ENCODE measurements at regions of chr11 and their contacts with region 1.

Region 1: DNA sequence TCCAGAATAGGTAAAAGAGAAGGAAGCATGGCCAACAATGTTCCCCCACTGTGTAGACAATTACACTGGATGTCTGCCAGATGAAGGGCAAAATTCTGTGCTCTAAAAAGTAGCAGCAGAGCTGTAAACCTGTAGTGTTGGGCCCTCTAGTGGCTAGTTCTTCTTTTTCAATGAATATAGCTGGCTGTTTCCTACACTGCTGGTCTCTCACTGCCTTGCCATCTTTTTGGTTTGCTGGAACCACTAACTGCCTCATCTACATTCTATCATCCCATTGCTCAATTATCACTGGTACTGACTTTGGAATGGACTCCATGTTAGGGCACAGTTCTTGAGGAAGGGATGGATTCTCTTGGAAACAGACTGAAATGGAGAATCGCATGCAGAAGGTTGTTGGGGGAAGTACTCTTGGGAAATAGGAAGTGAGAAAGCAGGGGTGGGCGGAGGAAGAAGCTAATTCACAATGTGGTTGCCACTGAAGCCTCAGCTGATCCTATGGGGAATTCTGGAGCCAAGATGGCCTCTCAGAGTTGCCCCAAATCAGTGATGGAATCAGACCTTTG is 17.9 kb downstream of the KCNE3 start:
- DNase-seq: peak; percentile 75 to 87 (median 81)
- H3K4me3 ChIP-seq: peak overlapping the region in 2 of 7 experiments; percentile 6 to 25
- H3K27ac ChIP-seq: no peak overlapping the region
- H3K4me1 ChIP-seq: peaks cover 0 to 5% (median 1%) of the 10 kb centered on the region in 4 experiments
- H3K27me3 ChIP-seq: no peaks in the 10 kb centered on the region

Region 2: GRCh38 chr11:74255741-74256369 is 193.6 kb before region 1 on chr11:
- CTCF ChIA-PET with region 1: interaction called, 37 read pairs
- POLR2A ChIA-PET with region 1: no interaction called
- DNase-seq: peak; percentile 76 to 89 (median 83)
- H3K4me3 ChIP-seq: no peak overlapping the region
- H3K27ac ChIP-seq: no peak overlapping the region
- H3K4me1 ChIP-seq: no peaks in the 10 kb centered on the region
- H3K27me3 ChIP-seq: no peaks in the 10 kb centered on the region

Region 3: DNA sequence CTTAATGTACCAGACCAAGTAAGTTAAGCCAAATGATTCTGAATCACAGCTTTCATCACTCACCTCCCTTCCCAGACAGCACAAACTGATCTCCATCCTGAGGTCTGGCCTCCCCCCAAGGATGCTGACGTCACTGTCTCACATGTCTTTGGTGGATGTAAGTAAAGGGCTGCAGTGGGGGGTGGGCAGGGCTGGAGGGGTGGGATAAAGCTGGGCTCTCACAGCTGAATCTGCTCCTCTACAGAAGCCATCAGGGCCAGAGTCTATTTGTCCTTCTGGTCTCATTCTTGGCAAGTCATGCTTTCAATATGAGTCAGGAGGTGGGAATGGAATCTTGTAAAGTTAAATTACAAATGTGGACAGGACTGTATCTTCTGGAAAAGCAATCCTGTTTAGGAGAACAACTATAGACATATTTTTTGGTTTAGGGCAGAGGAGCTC is 170.7 kb before region 1 on chr11:
- CTCF ChIA-PET with region 1: no interaction called
- POLR2A ChIA-PET with region 1: no interaction called
- DNase-seq: no peak
- H3K4me3 ChIP-seq: no peak overlapping the region
- H3K27ac ChIP-seq: no peak overlapping the region
- H3K4me1 ChIP-seq: no peaks in the 10 kb centered on the region
- H3K27me3 ChIP-seq: no peaks in the 10 kb centered on the region

Region 4: GRCh38 chr11:74437441-74438042 is 11.9 kb before region 1 on chr11:
- CTCF ChIA-PET with region 1: interaction called, 15 read pairs
- POLR2A ChIA-PET with region 1: no interaction called
- DNase-seq: no peak
- H3K4me3 ChIP-seq: no peak overlapping the region
- H3K27ac ChIP-seq: no peak overlapping the region
- H3K4me1 ChIP-seq: no peaks in the 10 kb centered on the region
- H3K27me3 ChIP-seq: no peaks in the 10 kb centered on the region

Region 5: DNA sequence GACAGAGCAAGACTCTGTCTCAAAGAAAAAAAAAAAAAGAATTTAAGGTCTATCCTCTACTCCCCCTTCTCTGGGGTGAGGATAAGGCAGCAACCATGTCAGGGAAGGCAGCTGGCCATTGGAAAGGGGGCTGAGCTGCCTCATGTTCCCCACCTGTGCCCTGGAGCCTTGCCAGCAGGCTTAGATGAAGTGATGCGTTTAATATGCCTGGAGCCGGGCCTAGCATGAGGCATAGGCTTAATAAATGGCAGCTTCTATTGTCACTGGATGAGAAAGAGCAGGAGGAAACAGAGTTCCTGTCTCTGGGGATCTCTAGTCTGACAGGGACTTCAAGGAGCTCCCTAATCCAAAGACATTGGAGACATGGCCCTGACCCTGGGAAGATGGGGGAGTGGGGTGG is 21.1 kb after region 1 on chr11:
- CTCF ChIA-PET with region 1: interaction called, 13 read pairs
- POLR2A ChIA-PET with region 1: no interaction called
- DNase-seq: no peak
- H3K4me3 ChIP-seq: no peak overlapping the region
- H3K27ac ChIP-seq: no peak overlapping the region
- H3K4me1 ChIP-seq: peaks cover 0 to 17% (median 10%) of the 10 kb centered on the region in 4 experiments
- H3K27me3 ChIP-seq: peaks cover 0 to 2% (median 0%) of the 10 kb centered on the region in 5 experiments

Region 6: GRCh38 chr11:74551754-74552145 is 102.3 kb after region 1 on chr11:
- CTCF ChIA-PET with region 1: no interaction called
- POLR2A ChIA-PET with region 1: no interaction called
- DNase-seq: no peak
- H3K4me3 ChIP-seq: no peak overlapping the region
- H3K27ac ChIP-seq: no peak overlapping the region
- H3K4me1 ChIP-seq: no peaks in the 10 kb centered on the region
- H3K27me3 ChIP-seq: no peaks in the 10 kb centered on the region

Region 7: DNA sequence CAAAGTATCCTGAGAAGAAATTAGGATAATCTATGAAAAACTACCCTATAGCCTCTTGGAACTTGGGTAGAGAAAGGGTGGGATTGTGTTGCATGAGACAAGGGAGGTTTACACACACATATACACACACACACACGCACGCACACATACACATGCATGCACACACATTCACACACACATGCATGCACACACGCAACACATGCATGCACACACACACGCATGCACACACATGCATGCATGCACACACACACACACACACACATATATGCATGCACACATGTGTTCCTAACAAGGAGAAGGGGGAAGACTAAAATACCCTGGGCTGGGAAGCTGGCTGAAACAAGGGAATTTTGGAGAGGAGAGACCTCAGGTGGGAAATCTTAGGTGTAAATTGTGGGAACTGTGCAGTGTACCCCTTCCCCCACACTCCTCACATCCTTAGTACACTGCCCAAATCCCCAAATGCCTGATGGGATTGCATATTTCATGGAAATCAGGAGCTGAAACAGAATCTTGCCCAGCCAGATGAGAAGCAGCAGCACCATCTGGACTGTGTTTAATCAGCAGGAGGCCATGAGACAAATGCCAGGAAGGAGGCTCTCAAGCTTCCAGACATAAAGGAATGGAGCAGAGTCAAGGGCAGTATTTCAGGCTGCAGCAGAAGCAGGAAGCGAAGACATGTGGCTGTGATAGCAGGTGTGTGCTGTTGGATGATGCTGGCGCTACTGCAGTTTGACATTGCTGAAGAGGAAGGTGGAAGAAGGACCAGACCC is 128.4 kb after region 1 on chr11:
- CTCF ChIA-PET with region 1: interaction called, 242 read pairs
- POLR2A ChIA-PET with region 1: no interaction called
- DNase-seq: no peak
- H3K4me3 ChIP-seq: no peak overlapping the region
- H3K27ac ChIP-seq: no peak overlapping the region
- H3K4me1 ChIP-seq: peaks cover 0 to 12% (median 10%) of the 10 kb centered on the region in 4 experiments
- H3K27me3 ChIP-seq: peaks cover 0 to 2% (median 0%) of the 10 kb centered on the region in 5 experiments